ENCODE measurements at regions of chr13 and their contacts with region 1.

Region 1: DNA sequence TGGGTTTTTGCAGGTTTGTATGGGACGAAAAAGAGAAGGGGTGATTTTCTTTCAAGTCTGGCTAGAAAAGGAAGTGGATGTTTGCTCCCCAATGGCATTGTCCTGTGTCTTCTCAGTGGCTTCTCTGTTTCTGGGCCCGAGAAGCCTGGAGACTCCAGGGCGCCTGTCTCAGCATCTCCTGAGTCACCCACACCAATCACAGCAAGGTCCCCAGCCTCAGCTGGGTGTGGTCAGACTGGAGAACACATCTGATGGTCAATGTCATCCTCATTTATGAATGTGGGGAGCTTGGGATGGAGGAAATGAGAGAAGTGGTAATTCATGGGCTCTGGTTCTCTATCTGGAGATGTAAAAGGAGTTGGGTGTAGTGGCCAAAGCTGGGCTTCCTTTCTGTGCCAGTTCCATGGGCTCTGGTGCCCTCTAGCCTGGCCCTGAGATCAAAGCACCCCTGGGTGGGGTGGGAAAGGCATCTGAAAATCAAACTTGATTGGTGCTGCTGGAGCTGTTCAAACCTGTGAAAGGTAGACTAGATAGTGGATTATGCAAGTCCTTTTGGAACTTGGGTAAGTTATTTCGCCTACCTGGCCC is 13.4 kb downstream of the RASL11A start:
- DNase-seq: peak; percentile 26
- H3K4me3 ChIP-seq: no peak overlapping the region
- H3K27ac ChIP-seq: no peak overlapping the region
- H3K4me1 ChIP-seq: no peaks in the 10 kb centered on the region
- H3K27me3 ChIP-seq: peaks cover 2 to 3% of the 10 kb centered on the region in 2 experiments
- CTCF ChIP-seq: peak; percentile 39 to 43
- POLR2A ChIP-seq: no peak

Region 2: DNA sequence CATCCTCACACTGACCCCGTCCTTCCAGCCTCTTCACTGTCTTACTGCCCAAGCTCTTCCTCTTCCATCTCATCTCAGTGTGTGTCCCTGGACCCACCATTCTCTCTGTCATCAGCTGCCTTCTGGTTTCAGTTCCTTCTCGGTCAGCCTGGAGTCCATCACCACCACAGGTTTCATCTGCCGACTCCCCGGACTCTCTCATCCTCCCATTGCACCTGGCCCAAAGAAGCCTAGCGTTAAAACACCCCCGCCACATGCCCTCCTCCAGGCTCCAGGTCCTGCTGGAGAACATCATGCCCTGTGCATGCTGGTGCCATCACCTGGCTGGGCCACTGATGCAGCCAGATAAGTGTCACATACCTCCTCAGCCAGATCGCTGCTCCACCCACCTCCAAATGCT is 401.3 kb before region 1 on chr13:
- CTCF ChIA-PET with region 1: no interaction called
- POLR2A ChIA-PET with region 1: no interaction called
- dilution Hi-C with region 1: no loop called
- intact Hi-C with region 1: no loop called
- DNase-seq: no peak
- H3K4me3 ChIP-seq: no peak overlapping the region
- H3K27ac ChIP-seq: no peak overlapping the region
- H3K4me1 ChIP-seq: no peaks in the 10 kb centered on the region
- H3K27me3 ChIP-seq: no peaks in the 10 kb centered on the region
- CTCF ChIP-seq: no peak
- POLR2A ChIP-seq: no peak

Region 3: GRCh38 chr13:26946684-26947343 is 337.2 kb before region 1 on chr13:
- CTCF ChIA-PET with region 1: interaction called, 20 read pairs
- POLR2A ChIA-PET with region 1: no interaction called
- dilution Hi-C with region 1: no loop called
- intact Hi-C with region 1: loop called (anchors 5 kb)
- DNase-seq: peak; percentile 39
- H3K4me3 ChIP-seq: no peak overlapping the region
- H3K27ac ChIP-seq: no peak overlapping the region
- H3K4me1 ChIP-seq: no peaks in the 10 kb centered on the region
- H3K27me3 ChIP-seq: peaks cover 10 to 12% of the 10 kb centered on the region in 2 experiments
- CTCF ChIP-seq: peak; percentile 34 to 52
- POLR2A ChIP-seq: no peak

Region 4: GRCh38 chr13:27309967-27310598 is 26.1 kb after region 1 on chr13:
- CTCF ChIA-PET with region 1: no interaction called
- POLR2A ChIA-PET with region 1: no interaction called
- dilution Hi-C with region 1: no loop called
- intact Hi-C with region 1: no loop called
- DNase-seq: no peak
- H3K4me3 ChIP-seq: no peak overlapping the region
- H3K27ac ChIP-seq: no peak overlapping the region
- H3K4me1 ChIP-seq: no peaks in the 10 kb centered on the region
- H3K27me3 ChIP-seq: no peaks in the 10 kb centered on the region
- CTCF ChIP-seq: no peak
- POLR2A ChIP-seq: no peak

Region 5: DNA sequence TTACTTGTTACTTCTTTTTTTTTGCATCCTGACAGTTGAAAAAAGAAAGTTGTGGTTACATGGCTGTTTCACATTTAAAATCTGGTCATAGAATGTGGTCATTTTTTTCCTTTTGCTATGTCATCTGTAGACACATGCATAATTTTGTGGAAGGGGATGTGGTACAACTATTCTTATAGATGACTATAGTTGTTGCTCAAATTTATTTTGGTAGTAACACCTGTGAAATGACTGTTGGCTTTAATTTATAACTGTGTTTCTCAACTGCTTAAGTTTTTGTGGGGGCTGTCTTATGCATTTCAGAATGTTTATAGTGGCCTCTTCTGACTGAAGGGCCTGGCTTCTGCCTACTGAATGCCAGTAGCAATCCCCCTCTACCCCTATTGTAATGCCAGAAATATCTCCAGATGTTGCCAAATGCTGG is 984.8 kb after region 1 on chr13:
- CTCF ChIA-PET with region 1: no interaction called
- POLR2A ChIA-PET with region 1: no interaction called
- dilution Hi-C with region 1: no loop called
- intact Hi-C with region 1: no loop called
- DNase-seq: no peak
- H3K4me3 ChIP-seq: no peak overlapping the region
- H3K27ac ChIP-seq: no peak overlapping the region
- H3K4me1 ChIP-seq: no peaks in the 10 kb centered on the region
- H3K27me3 ChIP-seq: no peaks in the 10 kb centered on the region
- CTCF ChIP-seq: no peak
- POLR2A ChIP-seq: no peak

Measured in endothelial cell of umbilical vein (primary cell).